A549 (cell line): ENCODE measurements at regions of chr15 and their contacts with region 1.

Region 1: GRCh38 chr15:40249482-40250303 is 10.8 kb downstream of the PAK6 start:
- DNase-seq: no peak
- ATAC-seq: no peak; a peak in 1 of 6 replicates
- H3K4me3 ChIP-seq: no peak overlapping the region
- H3K27ac ChIP-seq: no peak overlapping the region
- H3K4me1 ChIP-seq: no peaks in the 10 kb centered on the region
- CTCF ChIP-seq: no peak
- EP300 ChIP-seq: no peak
- POLR2A ChIP-seq: no peak
- RAD21 ChIP-seq: no peak

Region 2: DNA sequence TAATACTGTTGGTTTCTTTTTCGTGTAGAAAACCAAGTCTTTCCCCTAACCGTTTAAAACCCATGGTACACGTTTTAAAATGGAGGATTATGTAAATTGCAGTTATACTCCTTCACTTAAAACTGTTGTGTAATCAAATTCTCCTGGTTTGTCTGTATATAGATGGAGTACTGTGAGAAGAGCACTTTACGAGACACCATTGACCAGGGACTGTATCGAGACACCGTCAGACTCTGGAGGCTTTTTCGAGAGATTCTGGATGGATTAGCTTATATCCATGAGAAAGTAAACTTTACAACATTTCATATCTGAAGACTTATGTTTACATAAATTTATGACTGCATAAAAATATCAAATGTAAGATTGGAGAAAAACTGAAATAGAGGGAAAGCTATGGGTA is 261.9 kb before region 1 on chr15:
- CTCF ChIA-PET with region 1: no interaction called
- POLR2A ChIA-PET with region 1: no interaction called
- DNase-seq: no peak
- ATAC-seq: no peak
- H3K4me3 ChIP-seq: no peak overlapping the region
- H3K27ac ChIP-seq: no peak overlapping the region
- H3K4me1 ChIP-seq: no peaks in the 10 kb centered on the region
- CTCF ChIP-seq: no peak
- EP300 ChIP-seq: no peak
- POLR2A ChIP-seq: no peak
- RAD21 ChIP-seq: no peak

Region 3: GRCh38 chr15:40232625-40233070 is 17.0 kb before region 1 on chr15:
- CTCF ChIA-PET with region 1: no interaction called
- POLR2A ChIA-PET with region 1: no interaction called
- DNase-seq: no peak
- ATAC-seq: no peak
- H3K4me3 ChIP-seq: no peak overlapping the region
- H3K27ac ChIP-seq: no peak overlapping the region
- H3K4me1 ChIP-seq: no peaks in the 10 kb centered on the region
- CTCF ChIP-seq: no peak
- EP300 ChIP-seq: no peak
- POLR2A ChIP-seq: no peak
- RAD21 ChIP-seq: no peak

Region 4: DNA sequence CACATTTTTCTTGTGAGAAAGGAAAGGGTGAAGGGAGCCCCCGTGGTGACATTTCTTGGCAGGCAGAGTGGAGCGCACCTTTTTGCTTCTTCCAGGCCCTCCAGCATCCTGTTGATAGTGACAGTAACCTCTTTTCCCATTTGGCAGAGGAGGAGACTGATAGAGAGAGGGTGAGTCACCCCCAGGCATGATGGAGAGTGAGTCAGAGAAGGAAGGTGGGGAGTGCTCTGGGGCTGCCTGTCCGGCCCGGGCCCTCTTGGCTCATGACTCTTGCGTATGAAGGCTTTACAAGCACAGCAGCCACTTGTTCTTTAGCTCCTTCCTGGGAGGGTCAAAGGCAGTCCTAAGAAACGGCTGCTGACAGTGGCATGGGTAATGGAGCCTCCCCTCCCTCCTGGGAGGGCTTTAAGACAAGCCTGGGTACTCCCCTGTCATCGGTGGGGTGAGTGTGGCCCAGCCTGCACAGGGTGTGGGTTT is 17.2 kb after region 1 on chr15:
- CTCF ChIA-PET with region 1: interaction called, 248 read pairs
- POLR2A ChIA-PET with region 1: no interaction called
- DNase-seq: peak; percentile 75 to 85
- ATAC-seq: peak; percentile 96 to 97
- H3K4me3 ChIP-seq: no peak overlapping the region
- H3K27ac ChIP-seq: peak overlapping the region; percentile 59 to 85; a peak in 5 of 6 replicates
- H3K4me1 ChIP-seq: peaks cover 19% of the 10 kb centered on the region
- CTCF ChIP-seq: no peak
- EP300 ChIP-seq: no peak
- POLR2A ChIP-seq: no peak
- RAD21 ChIP-seq: no peak